ENCODE measurements at regions of chr7 and their contacts with region 1.

Region 1: GRCh38 chr7:37495574-37496184 is 47.0 kb upstream of the ELMO1 start:
- DNase-seq: no peak
- ATAC-seq: no peak
- H3K4me3 ChIP-seq: no peak overlapping the region
- H3K27ac ChIP-seq: no peak overlapping the region
- H3K4me1 ChIP-seq: peaks cover 0 to 3% (median 0%) of the 10 kb centered on the region in 12 donors
- H3K27me3 ChIP-seq: no peaks in the 10 kb centered on the region
- CTCF ChIP-seq: peak; percentile 61 to 86 (median 80)
- POLR2A ChIP-seq: no peak

Region 2: DNA sequence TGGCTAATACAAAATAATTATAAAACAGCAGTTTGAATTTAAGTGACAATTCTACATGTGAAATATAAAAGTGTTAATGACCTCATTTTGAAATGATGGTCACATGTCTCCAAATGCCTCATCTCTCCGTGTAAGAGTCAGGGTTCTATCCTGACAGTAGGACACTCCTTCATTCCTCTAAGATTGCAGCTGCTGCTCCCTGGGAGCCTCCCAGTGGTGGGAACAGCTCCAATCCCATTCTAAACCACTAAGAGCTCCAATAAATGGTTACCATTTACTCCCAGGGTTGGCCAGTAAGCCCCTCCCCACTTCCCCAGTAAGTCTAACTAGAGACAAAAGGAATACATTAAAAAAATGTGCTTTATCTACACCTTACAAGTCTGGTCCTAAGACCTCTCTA is 426.8 kb before region 1 on chr7:
- intact Hi-C with region 1: no loop called
- DNase-seq: no peak
- ATAC-seq: no peak
- H3K4me3 ChIP-seq: no peak overlapping the region
- H3K27ac ChIP-seq: no peak overlapping the region
- H3K4me1 ChIP-seq: peaks cover 0 to 5% (median 0%) of the 10 kb centered on the region in 12 donors
- H3K27me3 ChIP-seq: no peaks in the 10 kb centered on the region
- CTCF ChIP-seq: no peak
- POLR2A ChIP-seq: no peak

Region 3: GRCh38 chr7:37208528-37208927 is 287.2 kb before region 1 on chr7:
- intact Hi-C with region 1: loop called in 5 of 10 experiments (anchors 1 to 10 kb)
- DNase-seq: peak in 4 of 5 donors; percentile 73 to 76 (median 74)
- ATAC-seq: peak; percentile 85 to 93 (median 90)
- H3K4me3 ChIP-seq: no peak overlapping the region
- H3K27ac ChIP-seq: peak overlapping the region; percentile 6 to 75 (median 56)
- H3K4me1 ChIP-seq: peaks cover 0 to 33% (median 22%) of the 10 kb centered on the region in 12 donors
- H3K27me3 ChIP-seq: no peaks in the 10 kb centered on the region
- CTCF ChIP-seq: peak; percentile 51 to 82 (median 59)
- POLR2A ChIP-seq: no peak

Region 4: GRCh38 chr7:37234928-37235327 is 260.8 kb before region 1 on chr7:
- intact Hi-C with region 1: loop called in 3 of 10 experiments (anchors 10 kb)
- DNase-seq: no peak
- ATAC-seq: no peak
- H3K4me3 ChIP-seq: no peak overlapping the region
- H3K27ac ChIP-seq: no peak overlapping the region
- H3K4me1 ChIP-seq: peaks cover 0 to 10% (median 1%) of the 10 kb centered on the region in 12 donors
- H3K27me3 ChIP-seq: no peaks in the 10 kb centered on the region
- CTCF ChIP-seq: peak; percentile 27 to 65 (median 52)
- POLR2A ChIP-seq: no peak

Region 5: DNA sequence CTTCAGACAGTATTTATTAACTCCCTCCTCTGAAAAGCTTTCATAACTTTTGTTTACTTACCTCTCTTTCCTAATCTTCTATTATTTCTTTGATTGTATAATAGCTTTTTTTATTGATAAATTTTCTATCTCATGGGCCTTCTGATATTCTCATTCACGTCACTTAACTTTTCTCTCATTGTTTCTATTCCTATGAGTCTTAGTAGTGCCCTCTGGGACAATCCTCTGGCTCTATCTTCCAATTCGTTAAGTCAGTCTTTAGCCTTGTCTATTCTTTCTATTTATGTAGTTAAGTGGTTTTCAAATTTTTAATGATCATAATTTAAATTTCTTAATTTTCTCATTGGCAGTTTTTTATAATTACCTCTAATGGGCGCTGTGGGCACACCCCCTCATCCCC is 40.6 kb before region 1 on chr7:
- intact Hi-C with region 1: loop called in 2 of 10 experiments (anchors 5 kb)
- DNase-seq: no peak
- ATAC-seq: no peak
- H3K4me3 ChIP-seq: no peak overlapping the region
- H3K27ac ChIP-seq: no peak overlapping the region
- H3K4me1 ChIP-seq: no peaks in the 10 kb centered on the region
- H3K27me3 ChIP-seq: peaks cover 0 to 7% (median 0%) of the 10 kb centered on the region in 9 donors
- CTCF ChIP-seq: no peak
- POLR2A ChIP-seq: no peak

Region 6: GRCh38 chr7:38070718-38071117 is 575.0 kb after region 1 on chr7:
- intact Hi-C with region 1: no loop called
- DNase-seq: no peak
- ATAC-seq: peak in 3 of 4 donors; percentile 58 to 68 (median 66)
- H3K4me3 ChIP-seq: no peak overlapping the region
- H3K27ac ChIP-seq: no peak overlapping the region
- H3K4me1 ChIP-seq: peaks cover 0 to 10% (median 0%) of the 10 kb centered on the region in 12 donors
- H3K27me3 ChIP-seq: no peaks in the 10 kb centered on the region
- CTCF ChIP-seq: peak in 9 of 12 donors; percentile 18 to 62 (median 35)
- POLR2A ChIP-seq: no peak

Region 7: GRCh38 chr7:38451840-38452239 is 956.2 kb after region 1 on chr7:
- intact Hi-C with region 1: no loop called
- DNase-seq: no peak
- ATAC-seq: peak in 3 of 4 donors; percentile 45 to 72 (median 63)
- H3K4me3 ChIP-seq: no peak overlapping the region
- H3K27ac ChIP-seq: no peak overlapping the region
- H3K4me1 ChIP-seq: peaks cover 0 to 16% (median 7%) of the 10 kb centered on the region in 12 donors
- H3K27me3 ChIP-seq: no peaks in the 10 kb centered on the region
- CTCF ChIP-seq: peak in 11 of 12 donors; percentile 12 to 49 (median 30)
- POLR2A ChIP-seq: no peak

Measured in heart left ventricle (tissue), 16 donors.